ENCODE measurements at regions of chr2 and their contacts with region 1.

Region 1: GRCh38 chr2:47803363-47803762 is 20.4 kb downstream of the MSH6 start:
- DNase-seq: no peak
- ATAC-seq: no peak
- H3K4me3 ChIP-seq: no peak overlapping the region
- H3K4me3 Mint-ChIP-seq: no peak overlapping the region
- H3K27ac ChIP-seq: no peak overlapping the region
- H3K27ac Mint-ChIP-seq: no peak overlapping the region
- H3K4me1 ChIP-seq: no peaks in the 10 kb centered on the region
- H3K4me1 Mint-ChIP-seq: no peaks in the 10 kb centered on the region
- H3K27me3 ChIP-seq: no peaks in the 10 kb centered on the region
- H3K27me3 Mint-ChIP-seq: no peaks in the 10 kb centered on the region

Region 2: DNA sequence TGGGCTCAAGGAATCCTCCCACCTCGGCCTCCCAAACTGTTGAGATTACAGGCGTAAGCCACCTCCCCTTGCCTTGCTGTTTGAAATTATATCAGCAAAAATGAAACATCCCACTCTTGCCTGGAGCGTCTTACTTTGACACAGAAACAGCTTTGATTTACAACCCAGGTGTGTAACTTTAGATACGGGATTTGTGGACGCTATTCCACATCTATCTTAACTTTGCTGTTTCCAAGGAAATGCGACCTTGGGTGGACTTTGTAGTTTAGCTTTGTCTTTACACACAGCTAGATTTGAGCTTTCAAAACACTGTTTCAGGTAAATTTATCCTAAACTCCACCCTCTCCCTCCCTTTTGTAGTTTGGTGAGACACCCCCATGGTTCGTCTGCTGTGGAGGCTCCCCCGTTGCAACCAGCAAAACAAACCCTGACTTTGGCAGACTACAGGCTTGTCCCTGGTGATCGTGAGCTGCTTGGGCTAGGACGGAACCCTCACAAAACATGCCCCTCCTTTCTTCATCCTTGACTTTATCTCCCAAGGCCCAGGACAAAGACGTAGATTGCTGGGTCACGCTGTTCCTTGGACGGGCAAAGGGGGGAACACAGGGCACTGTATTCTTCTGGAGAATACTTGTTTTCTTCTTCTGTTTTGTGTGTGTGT is 26.0 kb before region 1 on chr2:
- CTCF ChIA-PET with region 1: no interaction called
- POLR2A ChIA-PET with region 1: no interaction called
- DNase-seq: no peak
- ATAC-seq: no peak
- H3K4me3 ChIP-seq: no peak overlapping the region
- H3K4me3 Mint-ChIP-seq: no peak overlapping the region
- H3K27ac ChIP-seq: no peak overlapping the region
- H3K27ac Mint-ChIP-seq: no peak overlapping the region
- H3K4me1 ChIP-seq: peaks cover 0 to 4% of the 10 kb centered on the region in 2 experiments
- H3K4me1 Mint-ChIP-seq: peaks cover 0 to 5% (median 0%) of the 10 kb centered on the region in 3 donors
- H3K27me3 ChIP-seq: peaks cover 0 to 1% of the 10 kb centered on the region in 2 experiments
- H3K27me3 Mint-ChIP-seq: peaks cover 0 to 2% of the 10 kb centered on the region in 2 donors

Region 3: GRCh38 chr2:47819834-47820233 is 16.5 kb after region 1 on chr2:
- CTCF ChIA-PET with region 1: no interaction called
- POLR2A ChIA-PET with region 1: no interaction called
- DNase-seq: no peak
- ATAC-seq: no peak
- H3K4me3 ChIP-seq: no peak overlapping the region
- H3K4me3 Mint-ChIP-seq: no peak overlapping the region
- H3K27ac ChIP-seq: no peak overlapping the region
- H3K27ac Mint-ChIP-seq: no peak overlapping the region
- H3K4me1 ChIP-seq: no peaks in the 10 kb centered on the region
- H3K4me1 Mint-ChIP-seq: no peaks in the 10 kb centered on the region
- H3K27me3 ChIP-seq: no peaks in the 10 kb centered on the region
- H3K27me3 Mint-ChIP-seq: no peaks in the 10 kb centered on the region

Region 4: DNA sequence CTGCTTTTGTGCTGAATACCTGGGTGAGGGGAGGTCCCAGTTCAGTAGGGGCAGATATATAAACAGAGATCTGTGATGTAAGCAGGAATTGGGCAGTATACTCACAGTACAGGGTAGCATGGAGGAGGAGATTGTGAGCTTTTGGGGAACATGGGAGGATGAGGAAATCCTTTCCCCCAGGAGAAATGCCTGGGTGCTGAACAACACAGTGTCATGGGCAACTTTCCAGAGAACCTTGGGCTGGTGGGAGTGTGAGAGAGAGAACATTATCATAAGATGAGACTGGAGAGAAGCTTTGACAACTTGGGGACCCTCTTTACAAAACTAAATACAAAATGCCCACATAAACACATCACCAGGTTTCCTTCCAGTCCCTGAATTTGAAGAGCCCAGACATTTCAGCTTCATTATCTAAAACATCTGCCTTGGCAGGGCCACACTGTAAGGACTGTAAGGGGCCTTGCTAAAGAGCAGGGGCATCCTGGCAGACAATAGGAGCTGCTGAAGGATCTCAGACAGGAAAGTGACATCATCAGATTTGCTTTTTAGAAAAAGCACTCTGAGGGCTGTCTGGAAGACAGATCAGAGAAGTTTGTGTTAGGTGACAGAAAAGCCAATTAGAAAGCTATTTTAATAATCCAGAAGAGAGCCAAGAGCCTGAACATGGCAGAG is 406.0 kb after region 1 on chr2:
- CTCF ChIA-PET with region 1: no interaction called
- POLR2A ChIA-PET with region 1: interaction called in 1 of 2 experiments, 15 read pairs
- DNase-seq: no peak
- ATAC-seq: no peak
- H3K4me3 ChIP-seq: no peak overlapping the region
- H3K4me3 Mint-ChIP-seq: no peak overlapping the region
- H3K27ac ChIP-seq: no peak overlapping the region
- H3K27ac Mint-ChIP-seq: peak overlapping the region in 1 of 2 donors; percentile 23
- H3K4me1 ChIP-seq: no peaks in the 10 kb centered on the region
- H3K4me1 Mint-ChIP-seq: peaks cover 2 to 7% (median 3%) of the 10 kb centered on the region in 3 donors
- H3K27me3 ChIP-seq: no peaks in the 10 kb centered on the region
- H3K27me3 Mint-ChIP-seq: no peaks in the 10 kb centered on the region

Measured in T-cell (primary cell).